ENCODE measurements at regions of chr9 and their contacts with region 1.

Region 1: DNA sequence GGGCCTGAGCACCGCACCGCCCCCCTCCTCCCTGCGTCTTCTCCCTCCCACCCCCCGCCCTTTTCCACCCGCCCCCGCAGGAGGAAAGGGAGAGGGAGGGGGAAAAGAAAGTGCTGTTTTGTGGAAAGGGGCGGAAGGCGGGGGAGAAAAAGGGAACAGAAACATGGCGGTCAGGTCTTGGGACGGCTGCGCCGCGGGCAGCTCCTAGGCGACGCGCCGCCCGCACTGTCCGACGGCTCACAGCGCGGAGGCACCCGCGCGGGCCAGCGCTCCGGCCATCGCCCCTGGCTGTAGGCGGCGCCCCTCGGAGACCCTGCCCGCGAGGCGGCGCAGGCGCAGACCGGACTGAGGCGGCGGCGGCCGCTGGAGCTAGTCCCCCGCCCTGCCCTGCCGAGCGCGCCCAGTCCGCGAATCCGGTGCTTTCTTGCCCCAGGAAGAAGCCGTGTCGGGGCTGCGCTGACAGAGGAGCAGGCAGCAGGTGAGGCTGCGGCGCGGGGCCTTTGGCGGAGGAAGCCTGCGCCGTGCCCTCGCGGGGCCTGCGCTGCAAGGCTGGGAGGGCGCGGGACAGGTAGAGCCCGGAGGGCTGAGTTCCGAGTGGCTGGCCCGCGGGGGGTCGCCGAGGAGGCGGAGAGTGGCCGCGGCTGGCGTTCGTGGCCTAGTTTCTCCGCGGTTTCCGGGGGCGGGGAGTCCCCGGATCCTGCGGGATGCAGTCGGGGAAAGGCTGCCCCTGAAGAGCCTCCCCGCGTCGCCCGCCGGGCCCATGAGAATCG is at the start of gene DENND4C:
- DNase-seq: peak; percentile 71 to 87
- ATAC-seq: peak; percentile 83 to 89
- H3K4me3 ChIP-seq: peak within 1 kb of the TSS; percentile 82
- H3K27ac ChIP-seq: peak within 1 kb of the TSS; percentile 91 to 93
- H3K4me1 ChIP-seq: peaks cover 14% of the 10 kb centered on the region; the same call in 2 of the 3 replicates
- CTCF ChIP-seq: peak; percentile 27; the same call in 1 of the 3 replicates
- EP300 ChIP-seq: no peak
- POLR2A ChIP-seq: peak; percentile 81
- RAD21 ChIP-seq: peak in 1 of 2 experiments; percentile 16; a peak in 2 of 5 replicates
- polyA plus RNA-seq, gene DENND4C: 40.9 and 44.1 TPM in 2 replicates

Region 2: DNA sequence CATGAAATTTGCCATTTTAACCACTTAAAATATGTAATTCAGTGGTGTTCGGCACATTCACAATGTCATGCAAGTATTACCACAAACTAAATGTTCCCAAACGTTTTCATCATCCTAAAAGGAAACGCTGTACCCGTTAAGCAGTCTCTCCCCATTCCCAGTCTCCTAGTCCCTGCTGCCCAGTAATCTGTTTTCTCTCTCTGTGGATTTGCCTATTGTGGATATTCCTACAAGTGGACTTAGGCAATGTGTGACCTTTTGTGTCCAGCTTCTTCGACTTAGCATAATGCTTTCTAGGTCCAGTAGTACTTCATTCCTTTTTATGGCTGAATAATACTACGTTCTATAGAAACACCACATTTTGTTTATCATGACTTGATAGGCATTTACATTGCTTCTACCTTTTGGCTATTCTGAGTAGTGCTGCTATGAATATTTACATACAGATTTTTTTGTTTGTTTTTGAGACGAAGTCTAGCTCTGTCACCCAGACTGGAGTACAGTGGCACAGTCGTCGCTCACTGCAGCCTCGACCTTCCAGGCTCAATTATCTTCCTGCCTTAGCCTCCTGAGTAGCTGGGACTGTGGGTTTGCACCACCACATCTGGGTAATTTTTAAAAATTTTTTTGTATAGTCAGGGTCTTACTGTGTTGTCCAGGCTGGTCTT is 13.0 kb after region 1 on chr9:
- CTCF ChIA-PET with region 1: interaction called, 4 read pairs
- POLR2A ChIA-PET with region 1: interaction called, 17 read pairs
- DNase-seq: no peak
- ATAC-seq: no peak
- H3K4me3 ChIP-seq: no peak overlapping the region
- H3K27ac ChIP-seq: no peak overlapping the region
- H3K4me1 ChIP-seq: peaks cover 15% of the 10 kb centered on the region; the same call in 1 of the 3 replicates
- CTCF ChIP-seq: no peak
- EP300 ChIP-seq: no peak
- POLR2A ChIP-seq: no peak
- RAD21 ChIP-seq: no peak

Region 3: DNA sequence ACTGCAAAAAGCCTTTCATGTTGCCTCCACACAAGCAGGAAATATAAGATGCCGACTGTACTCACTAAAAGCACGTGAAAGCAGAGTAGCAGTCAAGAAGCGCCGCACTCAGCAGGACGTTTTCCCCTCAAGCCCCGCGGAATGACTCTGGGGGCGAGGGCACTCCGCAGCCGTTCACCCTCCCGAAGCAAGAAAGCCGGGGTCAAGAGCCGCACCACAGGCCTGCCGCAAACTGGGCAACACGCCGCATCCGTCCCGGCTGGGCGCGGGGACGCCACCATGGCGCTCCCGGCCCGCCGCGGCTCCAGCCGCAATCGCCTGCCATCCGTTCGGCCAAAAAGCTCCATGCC is 149.1 kb after region 1 on chr9:
- CTCF ChIA-PET with region 1: interaction called, 3 read pairs
- POLR2A ChIA-PET with region 1: interaction called, 10 read pairs
- DNase-seq: no peak
- ATAC-seq: peak; percentile 55 to 56
- H3K4me3 ChIP-seq: peak overlapping the region; percentile 94
- H3K27ac ChIP-seq: peak overlapping the region; percentile 97 to 98
- H3K4me1 ChIP-seq: peaks cover 33% of the 10 kb centered on the region
- CTCF ChIP-seq: no peak
- EP300 ChIP-seq: no peak
- POLR2A ChIP-seq: no peak
- RAD21 ChIP-seq: no peak

Region 4: GRCh38 chr9:19441730-19442129 is 211.2 kb after region 1 on chr9:
- CTCF ChIA-PET with region 1: no interaction called
- POLR2A ChIA-PET with region 1: no interaction called
- DNase-seq: no peak
- ATAC-seq: no peak
- H3K4me3 ChIP-seq: no peak overlapping the region
- H3K27ac ChIP-seq: no peak overlapping the region
- H3K4me1 ChIP-seq: no peaks in the 10 kb centered on the region
- CTCF ChIP-seq: no peak
- EP300 ChIP-seq: no peak
- POLR2A ChIP-seq: no peak
- RAD21 ChIP-seq: no peak